B cell (primary cell): ENCODE measurements at regions of chr10 and their contacts with region 1.

Region 1: GRCh38 chr10:132571650-132572535 is 34.3 kb downstream of the INPP5A start:
- DNase-seq: peak; percentile 88
- ATAC-seq: peak; percentile 77
- H3K4me3 ChIP-seq: peak overlapping the region in 3 of 5 experiments; percentile 10 to 20 (median 11)
- H3K4me3 Mint-ChIP-seq: no peak overlapping the region
- H3K27ac ChIP-seq: peak overlapping the region; percentile 85 to 86
- H3K27ac Mint-ChIP-seq: no peak overlapping the region
- H3K4me1 ChIP-seq: peaks cover 49 to 59% of the 10 kb centered on the region in 2 donors
- H3K4me1 Mint-ChIP-seq: peaks cover 20% of the 10 kb centered on the region
- H3K27me3 ChIP-seq: no peaks in the 10 kb centered on the region
- H3K27me3 Mint-ChIP-seq: no peaks in the 10 kb centered on the region
- CTCF ChIP-seq: peak; percentile 64

Region 2: GRCh38 chr10:132458593-132459300 is 113.1 kb before region 1 on chr10:
- CTCF ChIA-PET with region 1: interaction called, 13 read pairs
- POLR2A ChIA-PET with region 1: no interaction called
- intact Hi-C with region 1: no loop called
- DNase-seq: peak; percentile 82
- ATAC-seq: peak; percentile 92
- H3K4me3 ChIP-seq: no peak overlapping the region
- H3K4me3 Mint-ChIP-seq: no peak overlapping the region
- H3K27ac ChIP-seq: no peak overlapping the region
- H3K27ac Mint-ChIP-seq: no peak overlapping the region
- H3K4me1 ChIP-seq: peaks cover 4% of the 10 kb centered on the region in 2 donors
- H3K4me1 Mint-ChIP-seq: peaks cover 2% of the 10 kb centered on the region
- H3K27me3 ChIP-seq: peaks cover 0 to 5% (median 0%) of the 10 kb centered on the region in 4 experiments
- H3K27me3 Mint-ChIP-seq: no peaks in the 10 kb centered on the region
- CTCF ChIP-seq: peak; percentile 90

Region 3: GRCh38 chr10:132551093-132551807 is 20.6 kb before region 1 on chr10:
- CTCF ChIA-PET with region 1: interaction called, 35 read pairs
- POLR2A ChIA-PET with region 1: interaction called, 23 read pairs
- intact Hi-C with region 1: loop called (anchors 1 kb)
- DNase-seq: peak; percentile 80
- ATAC-seq: peak; percentile 14
- H3K4me3 ChIP-seq: peak overlapping the region in 4 of 5 experiments; percentile 29 to 51 (median 41)
- H3K4me3 Mint-ChIP-seq: peak overlapping the region; percentile 85
- H3K27ac ChIP-seq: peak overlapping the region; percentile 87 to 88
- H3K27ac Mint-ChIP-seq: peak overlapping the region; percentile 96
- H3K4me1 ChIP-seq: peaks cover 76 to 82% of the 10 kb centered on the region in 2 donors
- H3K4me1 Mint-ChIP-seq: peaks cover 54% of the 10 kb centered on the region
- H3K27me3 ChIP-seq: no peaks in the 10 kb centered on the region
- H3K27me3 Mint-ChIP-seq: no peaks in the 10 kb centered on the region
- CTCF ChIP-seq: no peak

Region 4: GRCh38 chr10:132560241-132560731 is 11.6 kb before region 1 on chr10:
- CTCF ChIA-PET with region 1: interaction called, 18 read pairs
- POLR2A ChIA-PET with region 1: interaction called, 23 read pairs
- intact Hi-C with region 1: loop called (anchors 1 kb)
- DNase-seq: peak; percentile 69
- ATAC-seq: peak; percentile 32
- H3K4me3 ChIP-seq: peak overlapping the region in 2 of 5 experiments; percentile 1 to 19
- H3K4me3 Mint-ChIP-seq: peak overlapping the region; percentile 56
- H3K27ac ChIP-seq: peak overlapping the region; percentile 4 to 44
- H3K27ac Mint-ChIP-seq: peak overlapping the region; percentile 61
- H3K4me1 ChIP-seq: peaks cover 53 to 69% of the 10 kb centered on the region in 2 donors
- H3K4me1 Mint-ChIP-seq: peaks cover 55% of the 10 kb centered on the region
- H3K27me3 ChIP-seq: no peaks in the 10 kb centered on the region
- H3K27me3 Mint-ChIP-seq: no peaks in the 10 kb centered on the region
- CTCF ChIP-seq: no peak

Region 5: GRCh38 chr10:132588301-132589013 is 16.6 kb after region 1 on chr10:
- CTCF ChIA-PET with region 1: interaction called, 21 read pairs
- POLR2A ChIA-PET with region 1: interaction called, 16 read pairs
- intact Hi-C with region 1: loop called (anchors 1 kb)
- DNase-seq: peak; percentile 80
- ATAC-seq: peak; percentile 62
- H3K4me3 ChIP-seq: peak overlapping the region in 4 of 5 experiments; percentile 18 to 47 (median 36)
- H3K4me3 Mint-ChIP-seq: peak overlapping the region; percentile 89
- H3K27ac ChIP-seq: peak overlapping the region; percentile 82 to 86
- H3K27ac Mint-ChIP-seq: peak overlapping the region; percentile 95
- H3K4me1 ChIP-seq: peaks cover 57 to 71% of the 10 kb centered on the region in 2 donors
- H3K4me1 Mint-ChIP-seq: peaks cover 82% of the 10 kb centered on the region
- H3K27me3 ChIP-seq: no peaks in the 10 kb centered on the region
- H3K27me3 Mint-ChIP-seq: no peaks in the 10 kb centered on the region
- CTCF ChIP-seq: no peak

Region 6: GRCh38 chr10:132637477-132638129 is 65.7 kb after region 1 on chr10:
- CTCF ChIA-PET with region 1: interaction called, 32 read pairs
- POLR2A ChIA-PET with region 1: interaction called, 6 read pairs
- intact Hi-C with region 1: loop called (anchors 5 kb)
- DNase-seq: peak; percentile 79
- ATAC-seq: peak; percentile 55
- H3K4me3 ChIP-seq: no peak overlapping the region
- H3K4me3 Mint-ChIP-seq: peak overlapping the region; percentile 37
- H3K27ac ChIP-seq: no peak overlapping the region
- H3K27ac Mint-ChIP-seq: peak overlapping the region; percentile 64
- H3K4me1 ChIP-seq: peaks cover 29 to 30% of the 10 kb centered on the region in 2 donors
- H3K4me1 Mint-ChIP-seq: peaks cover 36% of the 10 kb centered on the region
- H3K27me3 ChIP-seq: no peaks in the 10 kb centered on the region
- H3K27me3 Mint-ChIP-seq: no peaks in the 10 kb centered on the region
- CTCF ChIP-seq: peak; percentile 75